Caco-2 (cell line): ENCODE measurements at regions of chr22 and their contacts with region 1.

Region 1: GRCh38 chr22:22687638-22688500 is 43.5 kb downstream of the GGTLC2 start:
- DNase-seq: peak; percentile 58 to 61
- H3K4me3 ChIP-seq: no peak overlapping the region
- H3K4me3 Mint-ChIP-seq: no peak overlapping the region
- H3K27ac Mint-ChIP-seq: no peak overlapping the region
- H3K4me1 ChIP-seq: peaks cover 20% of the 10 kb centered on the region
- H3K4me1 Mint-ChIP-seq: peaks cover 18% of the 10 kb centered on the region
- H3K27me3 ChIP-seq: no peaks in the 10 kb centered on the region
- H3K27me3 Mint-ChIP-seq: no peaks in the 10 kb centered on the region
- CTCF ChIP-seq: peak; percentile 71 to 81

Region 2: DNA sequence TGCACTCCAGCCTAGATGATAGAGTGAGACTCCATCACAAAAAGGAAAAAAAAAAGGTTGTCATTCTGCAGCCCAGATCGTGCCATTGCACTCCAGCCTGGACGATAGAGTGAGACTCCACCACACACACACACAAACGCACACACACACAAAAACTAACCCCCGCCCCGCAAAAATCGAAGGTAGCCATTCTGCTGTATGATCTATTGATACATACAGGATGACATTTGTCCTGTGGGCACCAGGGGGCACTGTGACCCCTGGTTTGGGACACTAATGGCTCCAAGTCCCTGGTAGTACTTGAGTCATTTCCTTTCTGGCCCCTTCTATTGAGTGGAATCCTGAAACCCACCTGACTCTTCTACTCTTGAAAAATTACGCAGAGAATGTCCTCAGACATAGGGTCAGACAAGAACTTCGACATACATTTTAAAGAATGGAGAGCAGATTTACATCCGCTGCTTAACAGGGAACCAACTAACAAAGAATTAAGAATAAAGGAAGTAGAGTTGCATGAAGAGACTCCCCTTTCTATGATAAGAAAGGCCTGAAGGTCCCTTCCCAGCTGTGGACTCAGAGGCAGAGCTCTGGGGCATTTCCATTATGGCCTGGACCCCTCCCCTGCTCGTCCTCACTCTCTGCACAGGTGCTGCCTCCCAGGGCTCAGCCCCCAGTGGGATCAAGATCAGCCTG is 93.8 kb before region 1 on chr22:
- CTCF ChIA-PET with region 1: no interaction called
- POLR2A ChIA-PET with region 1: no interaction called
- intact Hi-C with region 1: loop called (anchors 1 kb)
- DNase-seq: peak in 1 of 2 experiments; percentile 56
- H3K4me3 ChIP-seq: no peak overlapping the region
- H3K4me3 Mint-ChIP-seq: no peak overlapping the region
- H3K27ac Mint-ChIP-seq: no peak overlapping the region
- H3K4me1 ChIP-seq: no peaks in the 10 kb centered on the region
- H3K4me1 Mint-ChIP-seq: no peaks in the 10 kb centered on the region
- H3K27me3 ChIP-seq: no peaks in the 10 kb centered on the region; the same call in 1 of the 2 replicates
- H3K27me3 Mint-ChIP-seq: peaks cover 23% of the 10 kb centered on the region
- CTCF ChIP-seq: peak; percentile 52 to 68

Region 3: GRCh38 chr22:22666307-22667091 is 21.4 kb before region 1 on chr22:
- CTCF ChIA-PET with region 1: interaction called, 27 read pairs
- POLR2A ChIA-PET with region 1: interaction called, 5 read pairs
- intact Hi-C with region 1: loop called (anchors 1 kb)
- DNase-seq: peak; percentile 71 to 75
- H3K4me3 ChIP-seq: no peak overlapping the region
- H3K4me3 Mint-ChIP-seq: no peak overlapping the region
- H3K27ac Mint-ChIP-seq: no peak overlapping the region
- H3K4me1 ChIP-seq: no peaks in the 10 kb centered on the region
- H3K4me1 Mint-ChIP-seq: no peaks in the 10 kb centered on the region
- H3K27me3 ChIP-seq: no peaks in the 10 kb centered on the region
- H3K27me3 Mint-ChIP-seq: peaks cover 2% of the 10 kb centered on the region
- CTCF ChIP-seq: peak; percentile 53 to 79

Region 4: GRCh38 chr22:22754961-22755777 is 67.3 kb after region 1 on chr22:
- CTCF ChIA-PET with region 1: no interaction called
- POLR2A ChIA-PET with region 1: no interaction called
- intact Hi-C with region 1: no loop called
- DNase-seq: no peak
- H3K4me3 ChIP-seq: no peak overlapping the region
- H3K4me3 Mint-ChIP-seq: no peak overlapping the region
- H3K27ac Mint-ChIP-seq: no peak overlapping the region
- H3K4me1 ChIP-seq: no peaks in the 10 kb centered on the region
- H3K4me1 Mint-ChIP-seq: no peaks in the 10 kb centered on the region
- H3K27me3 ChIP-seq: no peaks in the 10 kb centered on the region; the same call in 1 of the 2 replicates
- H3K27me3 Mint-ChIP-seq: no peaks in the 10 kb centered on the region
- CTCF ChIP-seq: no peak